ENCODE measurements at regions of chr16 and their contacts with region 1.

Region 1: DNA sequence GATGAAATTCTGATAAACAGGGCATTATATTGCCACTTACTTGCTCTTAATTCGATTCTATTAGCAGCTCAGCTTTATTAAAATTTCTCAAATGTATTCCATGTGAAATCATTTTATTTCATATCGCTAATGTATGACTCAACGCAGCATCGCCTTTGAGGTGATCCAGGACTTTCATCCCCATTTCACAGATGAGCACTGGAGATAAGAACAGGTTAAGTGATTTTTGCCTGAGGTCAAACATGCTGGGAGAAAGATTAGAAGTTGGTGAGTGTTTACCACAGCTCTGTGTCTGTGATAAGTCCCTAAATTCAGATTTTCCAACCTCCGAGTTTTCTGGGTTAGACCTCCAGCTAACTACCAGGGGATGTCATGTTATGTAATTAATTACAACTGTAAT is 43.6 kb downstream of the RBFOX1 start:
- DNase-seq: no peak
- H3K4me3 ChIP-seq: no peak overlapping the region
- H3K27ac ChIP-seq: no peak overlapping the region
- H3K4me1 ChIP-seq: no peaks in the 10 kb centered on the region
- H3K27me3 ChIP-seq: no peaks in the 10 kb centered on the region
- CTCF ChIP-seq: no peak
- POLR2A ChIP-seq: no peak

Region 2: DNA sequence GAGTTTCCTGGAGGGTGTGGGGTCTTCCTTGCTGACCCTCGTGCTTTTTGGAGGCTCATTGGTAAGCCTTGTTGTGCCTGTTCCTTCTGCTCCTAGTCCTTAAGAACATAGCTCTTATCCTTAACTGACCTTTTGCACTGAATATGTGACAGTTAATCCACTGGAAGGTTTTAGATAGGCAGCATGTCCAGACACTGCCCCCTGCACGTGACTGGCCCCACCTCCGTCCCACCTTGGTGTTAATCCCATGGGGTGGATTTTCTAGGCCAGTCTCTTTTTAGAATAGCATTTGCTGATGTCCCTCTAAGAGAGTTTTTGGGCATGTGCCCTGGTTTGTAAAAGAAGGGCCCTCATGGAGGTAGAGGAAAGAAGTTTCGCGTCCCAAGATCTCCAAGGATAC is 14.7 kb after region 1 on chr16:
- intact Hi-C with region 1: loop called (anchors 1 kb)
- DNase-seq: no peak
- H3K4me3 ChIP-seq: no peak overlapping the region
- H3K27ac ChIP-seq: no peak overlapping the region
- H3K4me1 ChIP-seq: no peaks in the 10 kb centered on the region
- H3K27me3 ChIP-seq: no peaks in the 10 kb centered on the region
- CTCF ChIP-seq: no peak
- POLR2A ChIP-seq: no peak

Region 3: DNA sequence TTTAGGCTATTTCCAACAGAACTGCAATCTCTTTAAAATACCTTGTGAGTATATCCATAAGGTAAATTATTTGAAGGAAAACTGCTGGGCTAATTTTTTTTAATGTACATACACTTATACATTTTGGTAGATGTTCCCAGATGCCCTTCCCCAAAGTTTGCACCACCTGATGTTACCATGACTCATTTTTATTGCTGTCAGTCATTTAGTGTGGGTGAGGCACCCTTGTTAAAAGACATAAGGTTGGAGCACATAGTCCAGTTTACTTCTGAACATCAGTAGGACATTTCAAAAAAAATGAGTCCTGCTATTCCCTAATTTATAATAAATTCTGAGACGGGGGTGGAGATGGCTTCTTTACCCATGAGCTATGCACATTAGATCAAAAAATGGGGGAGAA is 95.0 kb after region 1 on chr16:
- intact Hi-C with region 1: no loop called
- DNase-seq: no peak
- H3K4me3 ChIP-seq: no peak overlapping the region
- H3K27ac ChIP-seq: no peak overlapping the region
- H3K4me1 ChIP-seq: no peaks in the 10 kb centered on the region
- H3K27me3 ChIP-seq: no peaks in the 10 kb centered on the region
- CTCF ChIP-seq: no peak
- POLR2A ChIP-seq: no peak

Measured in breast epithelium (tissue), 4 donors.